ENCODE measurements at regions of chr5 and their contacts with region 1.

Region 1: DNA sequence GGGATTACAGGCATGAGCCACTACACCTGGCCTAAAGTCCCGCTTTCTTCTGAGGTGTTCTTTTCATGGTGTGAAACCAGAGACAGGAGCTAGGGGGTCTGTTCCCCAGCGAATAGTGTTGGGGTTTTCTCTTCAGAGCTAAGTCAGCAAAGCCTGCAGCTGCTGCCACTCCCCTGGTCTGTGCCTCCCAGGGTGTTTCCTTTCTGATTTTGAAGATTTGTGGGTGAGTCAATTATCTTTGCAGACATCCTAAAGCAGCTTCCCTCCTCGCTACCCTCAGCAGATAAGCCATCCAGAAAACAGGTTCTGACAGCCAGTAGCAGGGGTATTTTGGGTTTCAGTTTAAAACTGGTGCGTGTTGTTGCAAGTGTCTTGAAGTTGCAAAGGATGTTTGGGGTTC is 72.0 kb upstream of the IQGAP2 start:
- DNase-seq: peak; percentile 58
- H3K4me3 Mint-ChIP-seq: no peak overlapping the region
- H3K27ac Mint-ChIP-seq: peak overlapping the region; percentile 55
- H3K4me1 Mint-ChIP-seq: peaks cover 65% of the 10 kb centered on the region
- H3K27me3 Mint-ChIP-seq: no peaks in the 10 kb centered on the region

Region 2: DNA sequence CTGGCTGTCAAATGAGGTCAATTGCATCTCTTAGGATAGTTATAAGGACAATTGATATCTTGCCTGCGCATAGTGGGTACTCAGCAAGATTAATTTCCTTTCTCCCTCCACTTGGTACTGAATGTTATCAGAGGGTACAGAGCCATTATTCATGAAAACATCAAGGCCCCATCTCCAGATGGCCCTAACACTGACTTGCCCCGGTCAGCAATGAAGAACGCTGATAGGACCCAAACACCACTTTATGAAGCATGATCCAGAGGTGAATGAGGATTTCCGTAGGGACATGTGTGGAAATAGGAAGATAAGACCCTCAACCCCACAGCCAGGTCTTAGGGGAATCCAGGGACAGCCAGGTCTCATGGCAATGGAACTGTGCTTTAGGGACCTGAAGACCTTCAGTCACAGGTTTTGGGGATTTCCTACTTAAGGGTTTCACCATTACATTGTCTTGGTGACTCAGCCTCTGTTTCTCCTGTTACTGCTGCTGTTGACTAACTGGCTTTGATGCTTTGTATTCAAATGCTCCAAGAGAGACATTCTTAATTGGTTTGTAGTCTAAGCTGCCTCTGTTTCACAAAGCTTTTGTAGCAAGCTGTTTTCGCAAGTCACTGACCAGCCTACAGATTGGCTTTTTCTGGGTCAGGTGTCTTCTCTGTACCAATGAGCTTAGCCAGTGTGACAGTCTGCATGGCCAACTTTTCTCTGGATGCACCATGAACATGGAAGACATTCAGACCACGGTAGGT is 36.7 kb after region 1 on chr5:
- CTCF ChIA-PET with region 1: no interaction called
- POLR2A ChIA-PET with region 1: no interaction called
- intact Hi-C with region 1: loop called (anchors 5 kb)
- DNase-seq: peak; percentile 62
- H3K4me3 Mint-ChIP-seq: peak overlapping the region; percentile 8
- H3K27ac Mint-ChIP-seq: peak overlapping the region; percentile 85
- H3K4me1 Mint-ChIP-seq: peaks cover 31% of the 10 kb centered on the region
- H3K27me3 Mint-ChIP-seq: no peaks in the 10 kb centered on the region

Region 3: DNA sequence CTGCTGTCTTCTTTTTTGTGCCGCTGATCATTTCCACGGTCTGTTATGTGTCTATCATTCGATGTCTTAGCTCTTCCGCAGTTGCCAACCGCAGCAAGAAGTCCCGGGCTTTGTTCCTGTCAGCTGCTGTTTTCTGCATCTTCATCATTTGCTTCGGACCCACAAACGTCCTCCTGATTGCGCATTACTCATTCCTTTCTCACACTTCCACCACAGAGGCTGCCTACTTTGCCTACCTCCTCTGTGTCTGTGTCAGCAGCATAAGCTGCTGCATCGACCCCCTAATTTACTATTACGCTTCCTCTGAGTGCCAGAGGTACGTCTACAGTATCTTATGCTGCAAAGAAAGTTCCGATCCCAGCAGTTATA is 401.9 kb after region 1 on chr5:
- CTCF ChIA-PET with region 1: no interaction called
- POLR2A ChIA-PET with region 1: no interaction called
- intact Hi-C with region 1: loop called (anchors 5 kb)
- DNase-seq: peak; percentile 77
- H3K4me3 Mint-ChIP-seq: peak overlapping the region; percentile 46
- H3K27ac Mint-ChIP-seq: peak overlapping the region; percentile 86
- H3K4me1 Mint-ChIP-seq: peaks cover 29% of the 10 kb centered on the region
- H3K27me3 Mint-ChIP-seq: peaks cover 3% of the 10 kb centered on the region